ENCODE measurements at regions of chr4 and their contacts with region 1.

Region 1: GRCh38 chr4:77959566-77960338 is 97.1 kb downstream of the MRPL1 start:
- DNase-seq: peak in 3 of 5 donors; percentile 17 to 83 (median 68)
- H3K4me3 ChIP-seq: peak overlapping the region in 2 of 3 donors; percentile 35 to 44
- H3K27ac ChIP-seq: no peak overlapping the region
- H3K4me1 ChIP-seq: no peaks in the 10 kb centered on the region
- H3K27me3 ChIP-seq: no peaks in the 10 kb centered on the region
- CTCF ChIP-seq: peak; percentile 64

Region 2: GRCh38 chr4:77911842-77912450 is 47.8 kb before region 1 on chr4:
- intact Hi-C with region 1: no loop called
- DNase-seq: no peak
- H3K4me3 ChIP-seq: no peak overlapping the region
- H3K27ac ChIP-seq: no peak overlapping the region
- H3K4me1 ChIP-seq: no peaks in the 10 kb centered on the region
- H3K27me3 ChIP-seq: no peaks in the 10 kb centered on the region
- CTCF ChIP-seq: no peak

Region 3: GRCh38 chr4:78213209-78213608 is 253.5 kb after region 1 on chr4:
- intact Hi-C with region 1: no loop called
- DNase-seq: no peak
- H3K4me3 ChIP-seq: no peak overlapping the region
- H3K27ac ChIP-seq: no peak overlapping the region
- H3K4me1 ChIP-seq: no peaks in the 10 kb centered on the region
- H3K27me3 ChIP-seq: no peaks in the 10 kb centered on the region
- CTCF ChIP-seq: no peak

Region 4: GRCh38 chr4:78325271-78326157 is 365.8 kb after region 1 on chr4:
- intact Hi-C with region 1: no loop called
- DNase-seq: no peak
- H3K4me3 ChIP-seq: no peak overlapping the region
- H3K27ac ChIP-seq: peak overlapping the region; percentile 20 to 76
- H3K4me1 ChIP-seq: peaks cover 0 to 12% (median 0%) of the 10 kb centered on the region in 3 donors
- H3K27me3 ChIP-seq: no peaks in the 10 kb centered on the region
- CTCF ChIP-seq: no peak

Region 5: DNA sequence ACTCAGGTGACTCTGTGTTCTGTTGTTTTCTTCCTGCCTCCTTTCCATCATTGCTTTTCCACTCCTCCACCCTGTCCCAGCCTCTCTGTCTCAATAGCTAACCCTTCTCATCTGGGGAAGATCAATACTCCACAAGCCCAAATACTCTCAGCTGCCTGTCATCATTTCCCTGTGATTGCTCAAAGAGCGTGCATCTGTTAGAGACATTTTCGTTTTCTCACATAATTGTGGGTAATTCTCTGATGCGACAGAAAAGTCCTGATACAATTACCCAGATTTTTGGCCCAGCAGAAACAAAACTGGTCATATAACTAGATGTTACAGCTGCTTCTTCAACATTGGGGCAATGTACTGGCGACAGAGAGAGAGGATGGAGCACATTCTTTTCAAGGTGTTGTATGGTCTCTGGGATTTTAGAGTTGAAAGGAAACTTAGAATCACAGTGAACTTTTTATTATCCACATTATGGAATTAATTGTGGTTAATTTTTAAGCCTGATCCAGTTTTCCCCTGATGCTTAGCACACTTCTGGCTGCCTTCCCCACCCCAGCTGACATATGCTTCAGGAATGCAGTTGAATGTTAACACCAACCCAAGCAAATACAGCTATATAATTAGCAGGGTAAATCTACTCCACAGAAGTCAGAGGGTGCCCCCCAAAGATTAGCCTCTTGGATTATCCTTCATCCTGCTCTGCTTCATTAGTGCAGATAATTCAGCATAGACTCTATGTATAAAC is 420.4 kb after region 1 on chr4:
- intact Hi-C with region 1: no loop called
- DNase-seq: peak in 3 of 5 donors; percentile 18 to 53 (median 45)
- H3K4me3 ChIP-seq: no peak overlapping the region
- H3K27ac ChIP-seq: peak overlapping the region; percentile 23 to 32
- H3K4me1 ChIP-seq: peaks cover 0 to 10% (median 5%) of the 10 kb centered on the region in 3 donors
- H3K27me3 ChIP-seq: no peaks in the 10 kb centered on the region
- CTCF ChIP-seq: no peak

Region 6: GRCh38 chr4:78517050-78517652 is 557.4 kb after region 1 on chr4:
- intact Hi-C with region 1: loop called (anchors 5 kb)
- DNase-seq: peak in 2 of 5 donors; percentile 49 to 73
- H3K4me3 ChIP-seq: no peak overlapping the region
- H3K27ac ChIP-seq: no peak overlapping the region
- H3K4me1 ChIP-seq: no peaks in the 10 kb centered on the region
- H3K27me3 ChIP-seq: no peaks in the 10 kb centered on the region
- CTCF ChIP-seq: peak; percentile 52